Activated naive CD4-positive, alpha-beta T cell treated with anti-CD3 and anti-CD28 coated beads for 36 hours (primary cell): ENCODE measurements at regions of chr9 and their contacts with region 1.

Region 1: GRCh38 chr9:75624998-75625397 is 265.5 kb upstream of the PCSK5 start:
- DNase-seq: no peak
- H3K4me3 Mint-ChIP-seq: no peak overlapping the region
- H3K27ac Mint-ChIP-seq: no peak overlapping the region
- H3K4me1 Mint-ChIP-seq: no peaks in the 10 kb centered on the region
- H3K27me3 Mint-ChIP-seq: peaks cover 42% of the 10 kb centered on the region

Region 2: DNA sequence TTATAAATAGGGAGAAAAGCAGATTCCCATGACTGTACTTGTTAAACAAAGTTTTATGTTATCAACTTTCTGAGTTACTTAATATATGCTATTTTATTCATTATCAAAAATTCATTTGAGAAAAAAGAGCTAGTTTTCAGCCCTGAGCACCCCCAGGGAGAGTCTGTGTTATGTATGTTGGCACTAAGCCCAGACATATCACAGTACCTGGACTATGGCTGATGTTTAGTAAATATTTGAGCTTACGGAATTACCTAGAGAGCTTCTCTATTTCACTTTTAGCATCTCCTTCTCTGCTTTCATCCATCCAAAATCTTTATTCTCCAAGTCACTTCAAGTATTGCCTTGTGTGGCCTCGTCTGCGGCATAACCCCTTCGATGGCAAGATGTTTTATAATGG is 39.6 kb after region 1 on chr9:
- CTCF ChIA-PET with region 1: no interaction called
- intact Hi-C with region 1: no loop called
- DNase-seq: no peak
- H3K4me3 Mint-ChIP-seq: no peak overlapping the region
- H3K27ac Mint-ChIP-seq: no peak overlapping the region
- H3K4me1 Mint-ChIP-seq: no peaks in the 10 kb centered on the region
- H3K27me3 Mint-ChIP-seq: peaks cover 21% of the 10 kb centered on the region

Region 3: DNA sequence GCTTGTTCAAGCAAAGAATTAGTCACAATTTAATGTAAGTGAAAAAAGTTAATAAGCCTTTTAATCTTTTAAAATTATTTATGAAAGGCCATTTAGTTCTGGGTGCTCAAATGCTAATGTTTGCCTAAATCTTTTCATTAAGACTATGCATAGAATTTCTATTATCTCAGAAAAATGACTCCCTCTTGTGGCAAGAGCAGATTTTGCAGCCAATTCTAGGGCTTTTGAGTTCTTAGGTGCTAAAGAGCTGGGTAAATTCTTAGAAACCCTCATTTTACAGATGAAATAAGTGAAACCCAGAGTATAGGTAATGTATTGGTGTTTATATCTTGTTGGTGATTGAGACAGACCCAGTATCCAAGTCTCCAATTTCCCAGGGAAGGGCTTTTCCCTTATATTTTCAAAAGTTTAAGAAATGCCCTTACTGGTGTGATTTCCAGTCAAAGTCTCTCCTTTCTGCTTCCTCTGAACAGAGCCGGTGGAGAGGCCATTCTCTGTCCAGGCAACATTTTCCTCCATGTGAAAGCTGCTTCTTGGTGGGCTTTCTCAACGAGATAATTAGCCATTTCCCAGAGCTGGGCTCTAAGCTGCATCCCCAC is 241.4 kb after region 1 on chr9:
- CTCF ChIA-PET with region 1: interaction called, 3 read pairs
- intact Hi-C with region 1: loop called (anchors 10 kb)
- DNase-seq: peak; percentile 75
- H3K4me3 Mint-ChIP-seq: no peak overlapping the region
- H3K27ac Mint-ChIP-seq: no peak overlapping the region
- H3K4me1 Mint-ChIP-seq: peaks cover 15% of the 10 kb centered on the region
- H3K27me3 Mint-ChIP-seq: no peaks in the 10 kb centered on the region

Region 4: DNA sequence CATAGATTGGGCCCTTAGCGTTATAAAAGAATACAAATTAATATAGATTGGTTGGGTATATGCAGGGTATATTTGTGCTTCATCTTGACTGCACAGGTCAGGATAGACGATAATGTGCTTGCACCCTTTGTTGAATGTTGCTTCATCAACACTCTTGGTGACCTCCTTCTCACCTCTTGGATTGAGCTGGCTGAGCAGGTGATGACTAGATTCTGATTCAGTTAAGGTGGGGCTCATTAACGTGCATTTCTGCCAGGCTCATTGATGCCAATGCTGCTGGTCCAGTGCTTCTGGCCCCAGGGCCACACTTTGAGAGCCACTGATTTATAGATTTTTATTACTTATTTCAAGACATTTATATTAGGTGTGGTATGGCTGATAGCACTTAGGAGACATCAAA is 293.2 kb after region 1 on chr9:
- CTCF ChIA-PET with region 1: no interaction called
- intact Hi-C with region 1: no loop called
- DNase-seq: peak; percentile 53
- H3K4me3 Mint-ChIP-seq: no peak overlapping the region
- H3K27ac Mint-ChIP-seq: no peak overlapping the region
- H3K4me1 Mint-ChIP-seq: peaks cover 33% of the 10 kb centered on the region
- H3K27me3 Mint-ChIP-seq: no peaks in the 10 kb centered on the region